ENCODE measurements at regions of chr2 and their contacts with region 1.

Region 1: DNA sequence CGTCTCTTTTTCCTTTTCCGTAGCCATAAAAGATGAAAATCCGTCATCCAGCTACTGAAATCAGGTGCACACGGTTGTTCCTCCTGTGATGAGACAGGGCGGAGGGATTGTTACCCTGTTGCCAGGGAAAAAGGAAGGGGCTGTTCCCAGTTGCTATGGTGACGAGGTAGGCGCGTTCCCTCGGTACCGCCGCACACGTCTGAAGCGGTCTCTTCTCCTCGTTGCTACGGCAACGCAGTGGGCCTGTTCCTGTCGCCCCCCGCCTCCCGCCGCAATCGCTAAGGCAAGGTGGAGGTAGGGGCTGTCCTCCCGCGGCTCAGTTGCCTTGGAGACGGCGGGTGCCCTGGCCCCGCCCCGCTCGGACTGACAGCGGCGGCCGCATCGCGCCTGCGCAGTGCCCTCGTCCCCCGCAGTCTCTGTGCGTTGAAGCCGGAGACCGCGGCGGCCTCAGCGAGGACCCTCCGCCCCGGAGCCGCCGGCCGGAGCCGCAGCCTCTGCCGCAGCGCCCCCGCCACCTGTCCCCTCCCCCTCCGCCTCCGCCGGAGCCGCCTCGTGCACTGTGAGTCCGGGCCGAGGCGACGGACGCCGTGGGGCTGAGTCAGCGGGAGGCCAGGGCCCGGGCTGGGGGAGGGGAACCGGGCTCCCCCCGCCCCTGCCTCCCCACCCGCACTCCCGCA is at the start of gene MAPRE3:
- DNase-seq: peak; percentile 91
- total RNA-seq, gene MAPRE3: 11.4 to 16.3 TPM

Region 2: DNA sequence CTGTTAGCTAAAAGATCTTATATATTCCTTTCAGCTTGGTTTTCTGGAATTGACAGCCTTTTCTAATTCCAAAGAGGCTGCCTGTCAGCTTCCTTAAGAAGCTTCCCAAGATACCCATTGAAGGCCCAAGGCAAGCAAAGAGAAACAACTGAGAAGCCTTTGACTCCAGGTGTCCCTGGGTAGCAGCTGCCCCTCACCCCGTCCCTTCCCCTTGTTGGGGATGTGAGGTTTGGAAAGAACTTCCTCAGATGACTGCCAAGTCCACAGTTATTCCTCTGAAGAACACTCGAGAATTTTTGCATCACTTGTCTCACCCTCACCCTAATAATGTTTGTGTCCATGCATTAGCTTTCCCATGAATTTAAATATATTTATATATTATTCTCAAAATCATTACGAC is 13.4 kb after region 1 on chr2:
- intact Hi-C with region 1: loop called in 1 of 2 experiments (anchors 1 kb)
- DNase-seq: no peak

Region 3: GRCh38 chr2:27281855-27282559 is 311.6 kb after region 1 on chr2 and contains the start of gene TRIM54:
- intact Hi-C with region 1: loop called in 1 of 2 experiments (anchors 10 kb)
- DNase-seq: peak; percentile 72
- total RNA-seq, gene TRIM54: 0.32 to 0.52 TPM